Mammary epithelial cell (primary cell): ENCODE measurements at regions of chr2 and their contacts with region 1.

Region 1: GRCh38 chr2:68467077-68467960 is at the starts of genes APLF and FBXO48:
- DNase-seq: peak; percentile 99
- H3K4me3 ChIP-seq: peak within 1 kb of the TSS; percentile 93 to 98 (median 97)
- H3K27ac ChIP-seq: peak within 1 kb of the TSS; percentile 94
- H3K4me1 ChIP-seq: peaks cover 25% of the 10 kb centered on the region
- H3K27me3 ChIP-seq: no peaks in the 10 kb centered on the region
- CTCF ChIP-seq: no peak
- total RNA-seq, gene APLF: 3.7 to 4.8 TPM
- total RNA-seq, gene FBXO48: 1.3 to 1.6 TPM

Region 2: DNA sequence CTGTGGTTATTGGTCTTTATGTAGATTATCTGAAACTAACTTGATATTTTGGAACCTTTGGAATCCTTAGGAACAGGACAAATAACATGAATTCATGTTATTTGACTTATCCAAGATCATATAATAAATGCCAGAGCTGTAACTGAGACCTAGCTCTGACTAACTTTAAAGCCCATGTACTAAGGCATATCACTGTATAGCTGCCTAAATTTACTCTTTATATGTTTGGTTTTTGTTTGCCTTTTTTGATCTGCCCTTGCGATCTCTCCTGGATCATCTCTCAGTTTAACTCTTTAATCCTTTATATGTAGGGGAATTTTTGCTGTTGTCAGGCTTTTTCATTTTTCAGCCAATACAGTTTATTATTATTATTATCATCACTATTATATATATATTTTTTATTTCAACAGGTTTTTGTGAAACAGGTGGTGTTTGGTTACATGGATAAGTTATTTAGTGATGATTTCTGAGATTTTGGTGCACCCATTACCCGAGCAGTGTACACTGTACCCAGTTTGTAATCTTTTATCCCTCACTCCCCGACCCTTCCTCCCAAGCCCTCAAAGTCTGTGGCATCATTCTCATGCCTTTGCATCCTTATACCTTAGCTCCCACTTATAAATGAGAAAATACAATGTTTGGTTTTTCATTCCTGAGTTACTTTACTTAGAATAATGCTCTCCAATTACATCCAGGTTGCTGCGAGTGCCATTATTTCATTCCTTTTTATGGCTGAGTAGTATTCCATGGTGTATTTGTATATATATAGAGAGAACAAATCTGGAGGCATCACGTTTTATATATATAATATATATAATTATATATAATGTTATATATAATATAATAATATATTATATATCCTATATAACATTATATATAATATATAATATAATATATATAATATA is 49.0 kb after region 1 on chr2:
- CTCF ChIA-PET with region 1: no interaction called
- dilution Hi-C with region 1: no loop called
- in situ Hi-C with region 1: no loop called
- intact Hi-C with region 1: no loop called
- DNase-seq: no peak
- H3K4me3 ChIP-seq: no peak overlapping the region
- H3K27ac ChIP-seq: no peak overlapping the region
- H3K4me1 ChIP-seq: no peaks in the 10 kb centered on the region
- H3K27me3 ChIP-seq: no peaks in the 10 kb centered on the region
- CTCF ChIP-seq: no peak

Region 3: GRCh38 chr2:68646302-68646701 is 179.0 kb after region 1 on chr2:
- CTCF ChIA-PET with region 1: interaction called, 8 read pairs
- dilution Hi-C with region 1: no loop called
- in situ Hi-C with region 1: no loop called
- intact Hi-C with region 1: loop called (anchors 1 kb)
- DNase-seq: peak; percentile 24
- H3K4me3 ChIP-seq: no peak overlapping the region
- H3K27ac ChIP-seq: no peak overlapping the region
- H3K4me1 ChIP-seq: peaks cover 9% of the 10 kb centered on the region
- H3K27me3 ChIP-seq: peaks cover 21% of the 10 kb centered on the region
- CTCF ChIP-seq: peak in 1 of 2 donors; percentile 54

Region 4: GRCh38 chr2:68715353-68716041 is 248.2 kb after region 1 on chr2:
- CTCF ChIA-PET with region 1: no interaction called
- dilution Hi-C with region 1: no loop called
- in situ Hi-C with region 1: loop called in 1 of 2 experiments (anchors 10 kb)
- intact Hi-C with region 1: loop called (anchors 1 kb)
- DNase-seq: peak; percentile 62
- H3K4me3 ChIP-seq: no peak overlapping the region
- H3K27ac ChIP-seq: no peak overlapping the region
- H3K4me1 ChIP-seq: no peaks in the 10 kb centered on the region
- H3K27me3 ChIP-seq: no peaks in the 10 kb centered on the region
- CTCF ChIP-seq: peak; percentile 86 to 89

Region 5: GRCh38 chr2:68828887-68829708 is 361.8 kb after region 1 on chr2:
- CTCF ChIA-PET with region 1: no interaction called
- dilution Hi-C with region 1: no loop called
- in situ Hi-C with region 1: no loop called
- intact Hi-C with region 1: loop called (anchors 10 kb)
- DNase-seq: peak; percentile 88
- H3K4me3 ChIP-seq: no peak overlapping the region
- H3K27ac ChIP-seq: no peak overlapping the region
- H3K4me1 ChIP-seq: peaks cover 32% of the 10 kb centered on the region
- H3K27me3 ChIP-seq: no peaks in the 10 kb centered on the region
- CTCF ChIP-seq: peak in 1 of 2 donors; percentile 6

Region 6: GRCh38 chr2:68925295-68925896 is 458.1 kb after region 1 on chr2:
- CTCF ChIA-PET with region 1: no interaction called
- dilution Hi-C with region 1: no loop called
- in situ Hi-C with region 1: loop called (anchors 10 kb)
- intact Hi-C with region 1: loop called (anchors 1 kb)
- DNase-seq: peak; percentile 55
- H3K4me3 ChIP-seq: no peak overlapping the region
- H3K27ac ChIP-seq: no peak overlapping the region
- H3K4me1 ChIP-seq: peaks cover 21% of the 10 kb centered on the region
- H3K27me3 ChIP-seq: no peaks in the 10 kb centered on the region
- CTCF ChIP-seq: peak; percentile 99